Common myeloid progenitor, CD34-positive (primary cell): ENCODE measurements at regions of chr1 and their contacts with region 1.

Region 1: DNA sequence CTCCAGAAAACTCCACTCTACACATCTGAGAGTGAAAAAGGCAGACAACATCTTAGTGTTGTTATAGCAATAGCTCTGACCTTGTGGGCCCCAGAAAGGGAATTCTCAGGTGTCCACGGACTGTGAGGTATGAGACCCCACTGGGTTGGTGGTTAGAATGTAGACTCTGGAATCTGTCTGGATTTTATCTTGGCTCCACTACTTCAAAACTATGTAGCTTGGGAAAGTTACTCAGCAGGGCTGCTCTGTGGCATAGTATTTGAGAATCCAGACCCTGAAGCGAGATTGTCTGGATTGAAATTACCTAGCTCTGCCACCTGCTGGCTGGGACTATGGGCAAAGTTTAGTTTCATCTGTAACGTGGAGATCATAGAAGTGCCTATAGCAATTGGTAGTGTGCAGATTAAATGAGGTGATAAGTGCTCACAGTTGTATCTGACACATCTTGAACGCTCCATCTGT is 25.8 kb downstream of the PRDM2 start:
- DNase-seq: peak; percentile 70 to 83 (median 78)
- H3K4me3 ChIP-seq: no peak overlapping the region
- H3K27ac ChIP-seq: no peak overlapping the region
- H3K4me1 ChIP-seq: peaks cover 27 to 45% (median 36%) of the 10 kb centered on the region in 4 experiments
- H3K27me3 ChIP-seq: no peaks in the 10 kb centered on the region

Region 2: DNA sequence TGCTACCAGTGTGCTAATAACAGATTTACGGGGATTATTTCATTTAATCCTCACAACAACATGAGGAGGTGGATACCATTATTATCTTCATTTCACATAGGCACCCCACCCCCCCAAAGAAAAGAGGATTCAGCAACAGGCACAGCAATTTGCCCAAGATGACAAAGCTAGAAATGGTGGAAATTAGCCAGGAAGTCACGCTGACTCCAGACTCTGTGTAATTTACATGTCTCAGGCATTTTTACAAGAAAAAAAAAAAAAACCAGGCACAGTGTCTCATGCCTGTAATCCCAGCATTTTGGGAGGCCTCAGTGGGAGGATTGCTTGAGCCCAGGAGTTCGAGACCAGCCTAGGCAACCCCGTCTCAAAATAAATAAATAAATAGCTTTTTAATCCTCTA is 63.3 kb before region 1 on chr1:
- CTCF ChIA-PET with region 1: interaction called, 71 read pairs
- POLR2A ChIA-PET with region 1: no interaction called
- DNase-seq: peak; percentile 40 to 82 (median 79)
- H3K4me3 ChIP-seq: peak overlapping the region in 2 of 7 experiments; percentile 21 to 55
- H3K27ac ChIP-seq: no peak overlapping the region
- H3K4me1 ChIP-seq: peaks cover 0 to 25% (median 5%) of the 10 kb centered on the region in 4 experiments
- H3K27me3 ChIP-seq: no peaks in the 10 kb centered on the region

Region 3: DNA sequence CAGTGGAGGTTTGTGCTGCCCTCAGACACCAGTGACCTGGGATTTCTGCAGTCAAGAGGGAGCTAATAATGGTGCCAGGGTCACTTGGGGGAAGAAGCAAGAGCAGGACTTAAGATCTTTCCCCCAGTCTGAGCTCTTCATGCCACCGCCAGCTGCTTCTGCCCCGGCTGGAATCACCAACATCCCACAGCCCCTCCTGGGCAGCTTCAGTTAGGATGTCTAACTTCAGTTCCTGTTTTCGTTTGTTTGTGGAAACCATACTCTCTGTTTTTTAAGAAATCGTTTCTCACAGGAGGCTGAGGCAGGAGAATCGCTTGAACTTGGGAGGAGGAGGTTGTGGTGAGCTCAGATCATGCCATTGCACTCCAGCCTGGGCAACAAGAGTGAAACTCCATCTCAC is 51.4 kb before region 1 on chr1:
- CTCF ChIA-PET with region 1: interaction called, 12 read pairs
- POLR2A ChIA-PET with region 1: no interaction called
- DNase-seq: peak in 2 of 3 donors; percentile 41 to 53
- H3K4me3 ChIP-seq: no peak overlapping the region
- H3K27ac ChIP-seq: no peak overlapping the region
- H3K4me1 ChIP-seq: peaks cover 0 to 4% (median 2%) of the 10 kb centered on the region in 4 experiments
- H3K27me3 ChIP-seq: no peaks in the 10 kb centered on the region

Region 4: GRCh38 chr1:13707164-13707563 is 18.6 kb before region 1 on chr1:
- CTCF ChIA-PET with region 1: interaction called, 18 read pairs
- POLR2A ChIA-PET with region 1: no interaction called
- DNase-seq: no peak
- H3K4me3 ChIP-seq: no peak overlapping the region
- H3K27ac ChIP-seq: no peak overlapping the region
- H3K4me1 ChIP-seq: peaks cover 0 to 18% (median 13%) of the 10 kb centered on the region in 4 experiments
- H3K27me3 ChIP-seq: no peaks in the 10 kb centered on the region

Region 5: GRCh38 chr1:13714851-13715250 is 10.9 kb before region 1 on chr1:
- CTCF ChIA-PET with region 1: interaction called, 24 read pairs
- POLR2A ChIA-PET with region 1: no interaction called
- DNase-seq: no peak
- H3K4me3 ChIP-seq: no peak overlapping the region
- H3K27ac ChIP-seq: no peak overlapping the region
- H3K4me1 ChIP-seq: no peaks in the 10 kb centered on the region
- H3K27me3 ChIP-seq: no peaks in the 10 kb centered on the region